ENCODE measurements at regions of chr4 and their contacts with region 1.

Region 1: GRCh38 chr4:128809477-128810330 is at the start of gene JADE1:
- DNase-seq: peak; percentile 96
- H3K4me3 Mint-ChIP-seq: peak within 1 kb of the TSS; percentile 94
- H3K27ac Mint-ChIP-seq: peak within 1 kb of the TSS; percentile 99
- H3K4me1 Mint-ChIP-seq: peaks cover 10% of the 10 kb centered on the region
- H3K27me3 Mint-ChIP-seq: peaks cover 1% of the 10 kb centered on the region
- total RNA-seq, gene JADE1: 42.6 and 47.0 TPM in 2 replicates

Region 2: DNA sequence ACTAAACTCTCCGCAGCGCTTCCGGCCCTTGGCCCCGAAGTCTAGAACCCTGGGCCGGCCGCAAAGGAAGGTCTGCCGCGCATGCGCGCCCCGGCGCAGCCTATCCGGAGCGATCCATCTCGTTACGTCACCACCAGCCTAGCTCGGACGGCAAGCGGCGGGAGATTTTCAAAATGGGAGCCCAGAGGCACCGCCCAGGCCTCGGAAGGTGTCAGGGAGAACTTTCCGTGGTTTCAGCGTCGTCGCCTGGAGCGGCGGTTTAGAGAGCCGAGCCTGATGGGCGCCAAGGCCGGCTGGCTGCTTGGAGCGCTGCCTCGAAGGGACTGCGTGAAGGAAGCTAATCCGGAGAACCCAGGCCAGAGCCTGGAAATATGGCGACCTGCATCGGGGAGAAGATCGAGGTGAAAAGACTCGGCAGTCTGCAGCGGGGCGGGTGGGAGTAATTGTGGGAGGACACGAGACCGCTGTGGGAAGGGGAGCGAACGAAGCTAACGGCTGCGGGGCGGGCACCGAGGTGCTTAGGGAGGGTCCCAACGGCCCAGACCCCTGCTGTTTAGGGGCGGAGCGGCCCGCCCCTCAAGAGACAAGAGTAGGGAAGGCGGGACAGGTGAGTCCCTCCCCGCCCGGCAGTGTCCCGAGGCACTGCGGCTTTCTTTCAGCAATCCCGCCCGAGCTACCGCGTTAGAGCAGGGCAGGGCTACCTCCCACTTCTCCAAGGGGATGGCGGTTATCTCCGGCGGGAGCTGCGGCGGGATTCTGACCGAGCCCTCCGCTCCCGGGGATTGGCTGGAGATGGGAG is 928.7 kb before region 1 on chr4 and contains the start of gene PLK4:
- intact Hi-C with region 1: loop called (anchors 2 kb)
- DNase-seq: peak; percentile 99
- H3K4me3 Mint-ChIP-seq: peak within 1 kb of the TSS; percentile 97
- H3K27ac Mint-ChIP-seq: peak within 1 kb of the TSS; percentile 93
- H3K4me1 Mint-ChIP-seq: peaks cover 25% of the 10 kb centered on the region
- H3K27me3 Mint-ChIP-seq: peaks cover 2% of the 10 kb centered on the region
- total RNA-seq, gene PLK4: 44.5 and 44.7 TPM in 2 replicates

Region 3: GRCh38 chr4:128060699-128061565 is 748.8 kb before region 1 on chr4 and contains the start of gene LARP1B:
- intact Hi-C with region 1: loop called (anchors 2 kb)
- DNase-seq: peak; percentile 98
- H3K4me3 Mint-ChIP-seq: peak within 1 kb of the TSS; percentile 90
- H3K27ac Mint-ChIP-seq: peak within 1 kb of the TSS; percentile 94
- H3K4me1 Mint-ChIP-seq: peaks cover 11% of the 10 kb centered on the region
- H3K27me3 Mint-ChIP-seq: peaks cover 3% of the 10 kb centered on the region
- total RNA-seq, gene LARP1B: 31.1 and 32.6 TPM in 2 replicates

Region 4: DNA sequence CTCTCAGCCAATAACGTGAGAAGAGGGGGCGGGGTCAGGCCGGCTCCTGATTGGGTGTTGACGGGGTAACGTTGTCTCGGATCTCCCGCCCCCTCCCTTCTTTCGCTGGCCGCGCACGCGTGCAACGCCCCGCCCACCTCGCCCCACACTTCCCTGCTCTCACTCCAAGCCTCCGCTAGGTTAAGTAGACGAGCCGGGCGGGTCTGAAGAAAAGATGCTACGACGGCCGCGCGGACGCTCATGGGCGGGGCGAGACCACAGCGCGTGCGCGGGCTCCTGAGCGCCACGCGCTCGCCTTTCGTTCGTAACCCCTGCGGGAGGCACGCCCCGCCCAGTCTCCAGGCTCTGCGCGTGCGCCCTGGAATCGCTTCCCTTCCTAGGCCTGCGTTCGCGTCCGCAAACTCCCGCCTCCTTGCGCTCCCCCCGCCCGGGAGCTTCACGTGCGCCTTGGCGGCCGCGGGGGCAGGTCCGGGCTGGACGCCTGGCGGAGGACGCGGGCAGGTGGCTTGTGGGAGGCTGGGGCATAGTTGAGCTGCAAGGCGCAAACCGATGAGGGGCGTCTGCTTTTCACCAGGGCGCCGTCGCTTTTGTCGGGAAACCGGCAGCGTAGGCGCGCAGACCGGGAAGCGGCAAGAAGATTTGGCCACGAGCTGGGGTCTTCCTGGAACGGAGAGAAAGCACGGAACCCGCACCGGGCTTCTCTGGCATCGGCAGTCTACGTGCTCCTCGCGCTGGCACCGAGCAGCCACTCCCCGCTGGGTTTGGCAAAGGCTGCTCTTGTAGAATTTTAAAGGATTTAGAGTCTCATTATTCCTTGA is 521.6 kb before region 1 on chr4:
- intact Hi-C with region 1: loop called (anchors 1 kb)
- DNase-seq: peak; percentile 99
- H3K4me3 Mint-ChIP-seq: peak overlapping the region; percentile 85
- H3K27ac Mint-ChIP-seq: peak overlapping the region; percentile 94
- H3K4me1 Mint-ChIP-seq: peaks cover 19% of the 10 kb centered on the region
- H3K27me3 Mint-ChIP-seq: no peaks in the 10 kb centered on the region

Region 5: DNA sequence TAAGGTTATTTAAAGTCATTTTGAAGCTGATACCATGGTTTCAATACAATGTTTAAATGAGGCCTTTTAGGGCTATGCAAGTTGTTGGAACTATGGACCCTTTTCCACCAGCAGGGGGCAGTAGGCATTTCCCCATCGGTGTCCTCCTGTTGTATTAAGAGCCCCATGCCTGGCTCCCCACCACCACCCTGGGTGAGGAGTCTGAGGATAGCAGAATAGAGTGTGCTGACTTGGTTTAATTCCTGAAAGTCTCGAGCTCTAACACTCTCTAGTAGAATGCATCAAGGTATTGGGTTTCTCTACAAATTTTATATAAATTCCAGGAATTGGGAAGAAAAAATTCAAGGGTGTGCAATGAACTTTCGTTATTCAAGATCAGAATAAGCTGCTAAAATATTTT is 235.0 kb before region 1 on chr4:
- intact Hi-C with region 1: loop called (anchors 5 kb)
- DNase-seq: peak; percentile 89
- H3K4me3 Mint-ChIP-seq: no peak overlapping the region
- H3K27ac Mint-ChIP-seq: no peak overlapping the region
- H3K4me1 Mint-ChIP-seq: no peaks in the 10 kb centered on the region
- H3K27me3 Mint-ChIP-seq: peaks cover 3% of the 10 kb centered on the region

Region 6: GRCh38 chr4:129093191-129093920 is 283.7 kb after region 1 on chr4 and contains the start of gene SCLT1:
- intact Hi-C with region 1: loop called (anchors 1 kb)
- DNase-seq: peak; percentile 99
- H3K4me3 Mint-ChIP-seq: peak within 1 kb of the TSS; percentile 53
- H3K27ac Mint-ChIP-seq: peak within 1 kb of the TSS; percentile 31
- H3K4me1 Mint-ChIP-seq: peaks cover 42% of the 10 kb centered on the region
- H3K27me3 Mint-ChIP-seq: no peaks in the 10 kb centered on the region
- total RNA-seq, gene SCLT1: 24.2 and 25.4 TPM in 2 replicates

Measured in activated CD4-positive, alpha-beta T cell treated with anti-CD3 and anti-CD28 coated beads, Interleukin-2, amount 10 ng/mL, durations not matched to agents 24 days and 14 days (primary cell).